ENCODE measurements at regions of chr5 and their contacts with region 1.

Region 1: DNA sequence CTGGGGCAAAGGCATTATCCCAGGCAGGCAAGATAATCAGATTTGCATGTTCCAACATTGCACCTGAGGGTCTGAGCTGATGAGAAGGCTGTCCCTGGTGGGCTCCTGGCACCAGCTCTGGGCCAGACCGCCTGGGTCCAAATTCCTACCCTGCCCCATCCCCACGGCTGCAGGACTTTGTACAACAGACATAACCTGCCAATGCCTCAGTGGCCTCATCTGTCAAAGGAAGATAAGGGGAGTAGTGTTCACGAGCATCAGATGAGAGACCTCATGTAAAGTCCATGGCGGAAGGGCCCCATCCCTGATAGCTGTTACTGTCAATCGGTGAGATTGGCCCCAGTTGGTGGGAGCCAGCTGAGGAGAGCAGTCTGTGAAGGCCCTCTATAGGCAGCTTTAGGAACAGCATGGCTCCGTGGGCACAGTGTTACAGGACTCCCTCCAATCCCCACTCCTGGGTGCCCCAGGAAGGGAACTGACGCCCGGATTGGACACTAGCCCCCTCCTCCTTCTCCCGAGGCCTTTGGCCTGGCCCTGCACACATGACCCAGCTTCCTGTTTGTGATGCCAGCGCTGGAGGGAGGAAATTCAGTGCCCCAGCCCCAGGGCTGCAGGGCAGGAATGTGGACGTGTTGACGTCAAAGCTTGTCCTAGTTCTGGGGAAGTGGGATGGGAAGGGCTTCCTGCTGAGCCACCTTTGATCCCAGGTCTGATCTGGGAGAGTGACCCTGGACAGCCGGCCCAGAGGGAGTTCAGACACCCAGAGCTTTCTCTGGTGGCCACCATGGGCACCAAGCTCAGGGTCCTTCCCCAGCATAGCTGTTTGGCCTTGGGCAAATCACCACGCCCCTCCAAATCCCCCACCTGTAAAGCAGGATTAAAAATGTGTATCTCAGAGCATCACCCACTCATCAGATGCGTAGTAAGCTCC is 56.2 kb downstream of the DUSP1 start:
- DNase-seq: peak; percentile 79 to 80
- H3K4me3 ChIP-seq: no peak overlapping the region
- H3K4me3 Mint-ChIP-seq: no peak overlapping the region
- H3K27ac Mint-ChIP-seq: no peak overlapping the region
- H3K4me1 ChIP-seq: peaks cover 23% of the 10 kb centered on the region
- H3K4me1 Mint-ChIP-seq: peaks cover 6% of the 10 kb centered on the region
- H3K27me3 ChIP-seq: no peaks in the 10 kb centered on the region
- H3K27me3 Mint-ChIP-seq: no peaks in the 10 kb centered on the region
- CTCF ChIP-seq: peak; percentile 84 to 85

Region 2: GRCh38 chr5:172736508-172737135 is 21.9 kb after region 1 on chr5:
- CTCF ChIA-PET with region 1: interaction called, 3 read pairs
- POLR2A ChIA-PET with region 1: no interaction called
- intact Hi-C with region 1: loop called (anchors 1 kb)
- DNase-seq: no peak
- H3K4me3 ChIP-seq: no peak overlapping the region
- H3K4me3 Mint-ChIP-seq: no peak overlapping the region
- H3K27ac Mint-ChIP-seq: peak overlapping the region; percentile 57
- H3K4me1 ChIP-seq: peaks cover 13% of the 10 kb centered on the region
- H3K4me1 Mint-ChIP-seq: peaks cover 6% of the 10 kb centered on the region
- H3K27me3 ChIP-seq: no peaks in the 10 kb centered on the region
- H3K27me3 Mint-ChIP-seq: no peaks in the 10 kb centered on the region
- CTCF ChIP-seq: no peak

Region 3: GRCh38 chr5:172764849-172765765 is 50.4 kb after region 1 on chr5:
- CTCF ChIA-PET with region 1: interaction called, 31 read pairs
- POLR2A ChIA-PET with region 1: interaction called, 8 read pairs
- intact Hi-C with region 1: loop called (anchors 2 kb)
- DNase-seq: peak; percentile 97 to 98
- H3K4me3 ChIP-seq: peak overlapping the region; percentile 31
- H3K4me3 Mint-ChIP-seq: peak overlapping the region; percentile 76
- H3K27ac Mint-ChIP-seq: peak overlapping the region; percentile 96
- H3K4me1 ChIP-seq: peaks cover 24% of the 10 kb centered on the region
- H3K4me1 Mint-ChIP-seq: peaks cover 28% of the 10 kb centered on the region
- H3K27me3 ChIP-seq: no peaks in the 10 kb centered on the region
- H3K27me3 Mint-ChIP-seq: no peaks in the 10 kb centered on the region
- CTCF ChIP-seq: no peak

Region 4: DNA sequence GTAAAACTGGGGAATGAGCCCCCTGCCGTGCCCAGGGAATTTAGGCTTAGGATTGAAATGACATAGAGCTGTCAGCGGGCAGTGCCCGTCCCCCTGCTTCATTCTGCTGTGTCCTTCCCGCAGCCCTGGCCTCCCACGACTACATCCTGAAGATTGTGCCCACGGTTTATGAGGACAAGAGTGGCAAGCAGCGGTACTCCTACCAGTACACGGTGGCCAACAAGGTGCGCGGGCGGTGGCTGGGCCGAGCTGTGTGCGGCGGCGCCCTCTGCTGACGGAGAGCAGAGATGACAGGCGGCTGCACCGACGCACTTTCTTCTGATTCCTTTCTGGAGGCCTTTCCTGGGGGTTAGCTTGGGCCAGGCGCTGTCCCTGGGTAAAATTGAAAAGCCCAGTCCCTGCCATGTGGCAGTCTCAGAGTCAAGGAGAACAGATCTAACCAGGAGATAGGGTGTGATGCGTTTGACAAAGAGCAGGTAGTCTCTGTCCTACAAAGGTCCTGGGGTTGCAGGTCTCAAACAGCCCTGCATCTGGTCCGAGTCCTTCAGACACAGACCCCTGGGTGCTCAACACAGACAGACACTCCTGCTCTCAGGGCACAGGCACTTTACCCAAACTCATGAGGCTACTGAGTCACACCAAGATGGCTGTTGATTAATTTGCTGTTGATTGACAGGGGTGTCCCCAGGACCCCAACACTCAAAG is 217.7 kb after region 1 on chr5:
- CTCF ChIA-PET with region 1: interaction called, 31 read pairs
- POLR2A ChIA-PET with region 1: no interaction called
- intact Hi-C with region 1: loop called (anchors 1 kb)
- DNase-seq: peak; percentile 58 to 67
- H3K4me3 ChIP-seq: no peak overlapping the region
- H3K4me3 Mint-ChIP-seq: no peak overlapping the region
- H3K27ac Mint-ChIP-seq: no peak overlapping the region
- H3K4me1 ChIP-seq: no peaks in the 10 kb centered on the region
- H3K4me1 Mint-ChIP-seq: no peaks in the 10 kb centered on the region
- H3K27me3 ChIP-seq: no peaks in the 10 kb centered on the region
- H3K27me3 Mint-ChIP-seq: no peaks in the 10 kb centered on the region
- CTCF ChIP-seq: peak; percentile 77 to 92

Region 5: DNA sequence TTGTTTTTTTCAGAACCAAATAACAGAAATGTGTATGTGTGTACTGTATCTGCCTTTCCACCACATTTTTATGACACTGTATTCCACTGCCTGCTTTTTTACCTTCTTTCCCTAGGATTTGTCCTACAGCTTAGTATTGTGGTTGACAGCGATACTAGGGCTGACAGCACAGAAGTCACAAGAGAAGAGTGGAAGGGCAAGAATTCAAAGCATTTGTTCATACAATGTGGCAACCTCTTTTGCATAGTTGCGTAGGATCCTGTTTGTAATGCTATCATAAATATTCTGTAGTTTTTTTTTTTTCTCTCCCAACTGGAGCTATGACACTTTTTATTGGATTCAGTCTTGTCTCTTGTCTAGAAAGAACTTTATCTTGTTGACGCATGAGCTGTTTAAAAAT is 424.0 kb after region 1 on chr5:
- CTCF ChIA-PET with region 1: no interaction called
- POLR2A ChIA-PET with region 1: no interaction called
- intact Hi-C with region 1: no loop called
- DNase-seq: peak in 1 of 2 experiments; percentile 36
- H3K4me3 ChIP-seq: no peak overlapping the region
- H3K4me3 Mint-ChIP-seq: no peak overlapping the region
- H3K27ac Mint-ChIP-seq: no peak overlapping the region
- H3K4me1 ChIP-seq: peaks cover 13% of the 10 kb centered on the region
- H3K4me1 Mint-ChIP-seq: no peaks in the 10 kb centered on the region
- H3K27me3 ChIP-seq: no peaks in the 10 kb centered on the region
- H3K27me3 Mint-ChIP-seq: no peaks in the 10 kb centered on the region
- CTCF ChIP-seq: no peak